ENCODE measurements at regions of chr13 and their contacts with region 1.

Region 1: DNA sequence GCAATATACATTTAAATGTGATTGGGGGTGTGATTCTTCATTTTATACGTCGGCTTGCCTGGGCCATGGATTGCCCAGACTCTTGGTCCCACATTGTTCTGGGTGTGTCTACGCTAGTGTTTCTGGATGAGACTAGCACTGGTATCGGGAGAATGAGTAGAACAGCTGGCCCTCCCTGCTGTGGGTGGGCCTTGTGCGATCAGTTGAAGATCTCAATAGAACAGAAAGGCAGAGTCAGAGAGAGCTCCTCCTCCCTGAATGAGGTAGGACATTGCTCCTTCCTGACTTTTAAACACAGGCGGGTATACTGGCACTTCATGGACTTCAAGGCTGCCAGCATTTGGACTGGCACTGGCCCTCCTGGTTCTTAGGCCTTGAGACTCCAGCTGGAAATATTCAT is 603.0 kb downstream of the LIG4 start:
- DNase-seq: no peak
- ATAC-seq: no peak
- H3K4me3 ChIP-seq: no peak overlapping the region
- H3K4me3 Mint-ChIP-seq: no peak overlapping the region
- H3K27ac ChIP-seq: no peak overlapping the region
- H3K27ac Mint-ChIP-seq: no peak overlapping the region
- H3K4me1 ChIP-seq: no peaks in the 10 kb centered on the region
- H3K4me1 Mint-ChIP-seq: no peaks in the 10 kb centered on the region
- H3K27me3 ChIP-seq: no peaks in the 10 kb centered on the region
- H3K27me3 Mint-ChIP-seq: no peaks in the 10 kb centered on the region

Region 2: GRCh38 chr13:106536244-106537034 is 1075.9 kb before region 1 on chr13:
- CTCF ChIA-PET with region 1: no interaction called
- POLR2A ChIA-PET with region 1: no interaction called
- intact Hi-C with region 1: no loop called
- DNase-seq: peak; percentile 63 to 90 (median 83)
- ATAC-seq: peak; percentile 66
- H3K4me3 ChIP-seq: peak overlapping the region; percentile 78
- H3K4me3 Mint-ChIP-seq: peak overlapping the region; percentile 87 to 98 (median 95)
- H3K27ac ChIP-seq: peak overlapping the region; percentile 12
- H3K27ac Mint-ChIP-seq: peak overlapping the region in 7 of 9 donors; percentile 52 to 86 (median 77)
- H3K4me1 ChIP-seq: peaks cover 5 to 19% of the 10 kb centered on the region in 2 donors
- H3K4me1 Mint-ChIP-seq: peaks cover 10 to 24% (median 19%) of the 10 kb centered on the region in 7 donors
- H3K27me3 ChIP-seq: no peaks in the 10 kb centered on the region
- H3K27me3 Mint-ChIP-seq: peaks cover 20 to 33% (median 24%) of the 10 kb centered on the region in 5 donors

Region 3: DNA sequence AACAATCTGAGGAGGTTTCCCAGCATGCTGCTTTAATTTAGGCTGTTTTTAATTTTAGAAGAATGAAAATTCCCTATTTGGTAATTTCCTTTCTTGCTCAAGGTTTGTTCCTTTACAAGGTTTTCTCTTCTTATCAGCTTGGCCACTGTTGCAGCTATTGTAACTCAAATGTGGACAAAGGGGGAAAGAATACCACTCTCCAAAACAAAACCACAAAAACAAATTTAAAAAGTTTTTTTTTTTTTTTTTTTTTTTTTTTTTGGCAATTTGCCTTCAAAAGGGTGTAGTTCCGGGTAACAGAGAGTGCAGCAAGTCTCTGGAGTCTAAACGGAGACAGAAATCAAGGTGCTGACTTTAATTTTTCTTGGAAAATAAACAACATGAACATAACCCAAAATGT is 738.1 kb before region 1 on chr13:
- CTCF ChIA-PET with region 1: no interaction called
- POLR2A ChIA-PET with region 1: no interaction called
- intact Hi-C with region 1: loop called in 1 of 2 experiments (anchors 5 kb)
- DNase-seq: no peak
- ATAC-seq: no peak
- H3K4me3 ChIP-seq: no peak overlapping the region
- H3K4me3 Mint-ChIP-seq: no peak overlapping the region
- H3K27ac ChIP-seq: no peak overlapping the region
- H3K27ac Mint-ChIP-seq: no peak overlapping the region
- H3K4me1 ChIP-seq: no peaks in the 10 kb centered on the region
- H3K4me1 Mint-ChIP-seq: no peaks in the 10 kb centered on the region
- H3K27me3 ChIP-seq: no peaks in the 10 kb centered on the region
- H3K27me3 Mint-ChIP-seq: peaks cover 0 to 14% (median 9%) of the 10 kb centered on the region in 5 donors

Measured in naive thymus-derived CD4-positive, alpha-beta T cell (primary cell).